ENCODE measurements at regions of chr7 and their contacts with region 1.

Region 1: GRCh38 chr7:135281363-135281949 is 47.8 kb downstream of the STRA8 start:
- DNase-seq: peak; percentile 69 to 79
- ATAC-seq: peak; percentile 94 to 99 (median 98)
- H3K4me3 ChIP-seq: no peak overlapping the region
- H3K27ac ChIP-seq: no peak overlapping the region
- H3K4me1 ChIP-seq: peaks cover 22% of the 10 kb centered on the region
- H3K27me3 ChIP-seq: no peaks in the 10 kb centered on the region
- CTCF ChIP-seq: peak; percentile 94

Region 2: DNA sequence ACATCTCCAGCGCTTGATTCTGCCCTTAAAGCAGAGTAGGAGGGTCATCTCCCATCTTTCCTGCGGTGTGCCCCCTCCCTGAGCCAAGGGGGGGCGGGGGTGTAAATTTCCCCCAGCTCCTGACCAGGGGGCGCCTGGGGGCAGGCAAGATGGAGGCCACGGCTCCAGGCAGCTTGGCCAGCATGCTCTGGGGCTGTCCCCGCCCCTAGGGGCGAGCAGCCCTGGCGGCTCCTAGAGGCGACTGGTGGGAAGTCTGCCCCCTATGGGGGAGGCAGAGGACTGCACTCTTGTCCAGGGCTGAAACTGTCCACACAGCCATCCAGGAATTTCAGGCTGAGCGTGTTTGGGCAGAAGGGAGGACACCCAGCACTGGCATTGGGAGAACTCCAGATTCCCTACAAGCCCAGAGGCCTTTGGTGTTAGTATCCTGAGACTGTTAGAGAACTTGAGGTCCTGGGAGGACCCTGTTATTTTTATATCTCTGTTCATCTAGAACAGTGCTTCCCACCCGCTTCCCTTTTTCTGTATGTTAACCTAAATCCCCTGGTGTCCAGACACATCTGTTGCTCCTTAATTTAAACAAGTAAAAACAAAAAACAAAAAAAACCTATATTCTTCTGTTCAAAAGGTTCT is 43.2 kb before region 1 on chr7:
- intact Hi-C with region 1: no loop called
- DNase-seq: no peak
- ATAC-seq: no peak
- H3K4me3 ChIP-seq: no peak overlapping the region
- H3K27ac ChIP-seq: no peak overlapping the region
- H3K4me1 ChIP-seq: no peaks in the 10 kb centered on the region
- H3K27me3 ChIP-seq: no peaks in the 10 kb centered on the region
- CTCF ChIP-seq: peak; percentile 12

Region 3: GRCh38 chr7:135335628-135336139 is 54.2 kb after region 1 on chr7:
- intact Hi-C with region 1: loop called (anchors 1 to 5 kb)
- DNase-seq: peak; percentile 27 to 64
- ATAC-seq: peak; percentile 85 to 96 (median 94)
- H3K4me3 ChIP-seq: no peak overlapping the region
- H3K27ac ChIP-seq: no peak overlapping the region
- H3K4me1 ChIP-seq: no peaks in the 10 kb centered on the region
- H3K27me3 ChIP-seq: no peaks in the 10 kb centered on the region
- CTCF ChIP-seq: peak; percentile 60

Region 4: DNA sequence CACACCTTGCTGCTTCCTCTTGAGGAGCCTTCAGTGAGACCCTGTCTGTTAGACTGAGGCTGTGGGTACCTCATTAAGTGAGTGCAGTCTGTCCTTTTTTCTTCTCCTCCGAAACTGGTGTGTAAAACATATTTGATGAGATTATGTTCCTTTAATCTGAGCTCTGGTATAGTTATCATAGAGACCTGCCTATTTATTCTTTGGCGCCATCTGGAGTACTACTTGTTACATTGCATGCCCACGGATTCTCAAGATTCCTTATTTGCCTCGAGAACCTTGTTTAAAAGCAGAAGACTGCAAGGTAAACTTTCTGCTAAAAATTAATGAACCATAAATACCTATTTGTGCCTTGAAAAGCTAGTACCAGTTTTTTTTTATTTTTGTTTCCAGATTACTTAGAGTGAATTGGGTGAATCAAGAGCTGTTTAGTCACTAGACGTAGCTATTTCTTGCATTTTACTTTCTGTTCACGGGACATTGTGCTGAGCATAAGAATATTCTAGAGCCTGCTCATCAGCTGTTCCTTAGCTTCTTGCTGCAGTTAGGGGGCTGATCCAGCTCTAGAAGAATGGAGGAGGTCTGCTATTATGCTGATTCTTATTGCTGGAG is 363.9 kb after region 1 on chr7:
- intact Hi-C with region 1: loop called (anchors 1 to 5 kb)
- DNase-seq: no peak
- ATAC-seq: peak; percentile 48 to 72 (median 57)
- H3K4me3 ChIP-seq: no peak overlapping the region
- H3K27ac ChIP-seq: no peak overlapping the region
- H3K4me1 ChIP-seq: no peaks in the 10 kb centered on the region
- H3K27me3 ChIP-seq: no peaks in the 10 kb centered on the region
- CTCF ChIP-seq: peak; percentile 67